CD8-positive, alpha-beta T cell (primary cell): ENCODE measurements at regions of chr1 and their contacts with region 1.

Region 1: GRCh38 chr1:46724991-46725735 is 6.2 kb upstream of the EFCAB14 start:
- DNase-seq: peak; percentile 42 to 86 (median 69)
- ATAC-seq: peak; percentile 100
- H3K4me3 ChIP-seq: no peak overlapping the region
- H3K4me3 Mint-ChIP-seq: no peak overlapping the region
- H3K27ac ChIP-seq: no peak overlapping the region
- H3K27ac Mint-ChIP-seq: no peak overlapping the region
- H3K4me1 ChIP-seq: no peaks in the 10 kb centered on the region
- H3K4me1 Mint-ChIP-seq: peaks cover 2% of the 10 kb centered on the region
- H3K27me3 ChIP-seq: no peaks in the 10 kb centered on the region
- H3K27me3 Mint-ChIP-seq: peaks cover 36% of the 10 kb centered on the region
- CTCF ChIP-seq: peak; percentile 60

Region 2: GRCh38 chr1:46406881-46407608 is 318.1 kb before region 1 on chr1:
- CTCF ChIA-PET with region 1: no interaction called
- POLR2A ChIA-PET with region 1: no interaction called
- intact Hi-C with region 1: loop called in 1 of 2 experiments (anchors 2 kb)
- DNase-seq: peak in 2 of 9 experiments; percentile 23 to 41
- ATAC-seq: no peak
- H3K4me3 ChIP-seq: no peak overlapping the region
- H3K4me3 Mint-ChIP-seq: no peak overlapping the region
- H3K27ac ChIP-seq: no peak overlapping the region
- H3K27ac Mint-ChIP-seq: no peak overlapping the region
- H3K4me1 ChIP-seq: no peaks in the 10 kb centered on the region
- H3K4me1 Mint-ChIP-seq: peaks cover 4% of the 10 kb centered on the region
- H3K27me3 ChIP-seq: no peaks in the 10 kb centered on the region
- H3K27me3 Mint-ChIP-seq: no peaks in the 10 kb centered on the region
- CTCF ChIP-seq: no peak

Region 3: DNA sequence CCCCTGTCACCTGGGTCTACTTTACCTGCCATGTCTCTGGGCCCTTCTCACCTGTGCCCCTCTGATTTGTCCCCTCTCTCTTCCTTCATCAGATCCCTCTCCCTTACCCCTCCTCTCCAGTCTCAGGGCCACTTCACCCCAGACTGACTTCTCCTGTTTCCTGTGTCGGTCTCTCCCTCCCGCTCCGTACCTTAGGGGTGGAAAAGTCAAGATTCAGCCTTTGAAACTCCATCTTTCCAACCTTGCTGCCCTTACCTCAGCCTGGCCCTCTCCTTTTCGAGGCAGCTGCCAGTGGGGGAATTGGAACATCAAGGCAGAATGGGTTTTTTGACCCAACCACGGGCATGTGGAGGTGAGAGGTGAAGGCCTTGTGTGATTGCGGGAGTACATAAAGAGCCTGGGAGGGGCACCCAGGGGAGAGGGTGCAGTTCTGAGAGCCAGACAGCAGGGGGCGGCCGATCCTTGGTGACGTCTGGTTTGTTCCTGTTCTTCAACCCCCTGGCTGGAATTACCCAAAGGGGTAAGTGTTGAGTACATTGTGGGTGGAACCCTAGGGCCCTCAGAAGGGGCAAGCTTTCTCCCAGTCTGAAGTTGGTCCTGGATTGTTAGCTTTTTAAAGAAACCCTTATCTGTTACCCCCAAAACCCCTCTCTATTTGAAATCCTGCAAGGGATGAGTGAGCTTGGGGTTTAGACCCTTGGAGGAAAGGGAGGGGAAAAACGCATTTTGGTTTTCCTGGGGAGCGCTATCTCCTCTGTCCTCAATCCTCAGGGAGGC is 247.8 kb before region 1 on chr1:
- CTCF ChIA-PET with region 1: interaction called, 7 read pairs
- POLR2A ChIA-PET with region 1: no interaction called
- intact Hi-C with region 1: loop called in 1 of 2 experiments (anchors 1 kb)
- DNase-seq: peak; percentile 52 to 79 (median 73)
- ATAC-seq: peak; percentile 97
- H3K4me3 ChIP-seq: no peak overlapping the region
- H3K4me3 Mint-ChIP-seq: no peak overlapping the region
- H3K27ac ChIP-seq: no peak overlapping the region
- H3K27ac Mint-ChIP-seq: no peak overlapping the region
- H3K4me1 ChIP-seq: no peaks in the 10 kb centered on the region
- H3K4me1 Mint-ChIP-seq: no peaks in the 10 kb centered on the region
- H3K27me3 ChIP-seq: peaks cover 0 to 6% of the 10 kb centered on the region in 2 experiments
- H3K27me3 Mint-ChIP-seq: peaks cover 28% of the 10 kb centered on the region
- CTCF ChIP-seq: peak; percentile 84

Region 4: DNA sequence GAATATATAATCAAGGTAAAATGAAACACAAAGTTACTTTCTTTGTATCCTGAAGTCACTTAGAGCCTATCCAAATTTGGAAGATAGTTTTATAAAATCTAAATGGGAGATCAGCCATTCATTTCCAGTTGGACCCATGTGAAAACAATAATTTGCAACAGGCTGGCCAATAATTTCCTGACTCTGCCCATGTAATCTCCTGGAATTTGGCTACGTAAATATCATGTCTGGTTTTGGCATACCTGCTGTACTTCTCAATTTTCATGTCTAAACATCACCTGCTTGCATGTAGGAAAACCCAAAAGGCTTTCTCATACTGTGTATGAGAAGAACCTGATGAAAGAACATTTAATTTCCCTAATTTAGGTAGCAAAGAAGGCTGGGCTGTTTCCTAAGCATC is 334.2 kb after region 1 on chr1:
- CTCF ChIA-PET with region 1: no interaction called
- POLR2A ChIA-PET with region 1: no interaction called
- intact Hi-C with region 1: no loop called
- DNase-seq: no peak
- ATAC-seq: no peak
- H3K4me3 ChIP-seq: no peak overlapping the region
- H3K4me3 Mint-ChIP-seq: no peak overlapping the region
- H3K27ac ChIP-seq: no peak overlapping the region
- H3K27ac Mint-ChIP-seq: no peak overlapping the region
- H3K4me1 ChIP-seq: no peaks in the 10 kb centered on the region
- H3K4me1 Mint-ChIP-seq: no peaks in the 10 kb centered on the region
- H3K27me3 ChIP-seq: peaks cover 0 to 3% of the 10 kb centered on the region in 2 experiments
- H3K27me3 Mint-ChIP-seq: peaks cover 30% of the 10 kb centered on the region
- CTCF ChIP-seq: no peak

Region 5: GRCh38 chr1:47280157-47280556 is 555.0 kb after region 1 on chr1:
- CTCF ChIA-PET with region 1: no interaction called
- POLR2A ChIA-PET with region 1: no interaction called
- intact Hi-C with region 1: no loop called
- DNase-seq: no peak
- ATAC-seq: no peak
- H3K4me3 ChIP-seq: no peak overlapping the region
- H3K4me3 Mint-ChIP-seq: no peak overlapping the region
- H3K27ac ChIP-seq: no peak overlapping the region
- H3K27ac Mint-ChIP-seq: no peak overlapping the region
- H3K4me1 ChIP-seq: no peaks in the 10 kb centered on the region
- H3K4me1 Mint-ChIP-seq: no peaks in the 10 kb centered on the region
- H3K27me3 ChIP-seq: no peaks in the 10 kb centered on the region
- H3K27me3 Mint-ChIP-seq: no peaks in the 10 kb centered on the region
- CTCF ChIP-seq: no peak